WTC11 (cell line): ENCODE measurements at regions of chr18 and their contacts with region 1.

Region 1: DNA sequence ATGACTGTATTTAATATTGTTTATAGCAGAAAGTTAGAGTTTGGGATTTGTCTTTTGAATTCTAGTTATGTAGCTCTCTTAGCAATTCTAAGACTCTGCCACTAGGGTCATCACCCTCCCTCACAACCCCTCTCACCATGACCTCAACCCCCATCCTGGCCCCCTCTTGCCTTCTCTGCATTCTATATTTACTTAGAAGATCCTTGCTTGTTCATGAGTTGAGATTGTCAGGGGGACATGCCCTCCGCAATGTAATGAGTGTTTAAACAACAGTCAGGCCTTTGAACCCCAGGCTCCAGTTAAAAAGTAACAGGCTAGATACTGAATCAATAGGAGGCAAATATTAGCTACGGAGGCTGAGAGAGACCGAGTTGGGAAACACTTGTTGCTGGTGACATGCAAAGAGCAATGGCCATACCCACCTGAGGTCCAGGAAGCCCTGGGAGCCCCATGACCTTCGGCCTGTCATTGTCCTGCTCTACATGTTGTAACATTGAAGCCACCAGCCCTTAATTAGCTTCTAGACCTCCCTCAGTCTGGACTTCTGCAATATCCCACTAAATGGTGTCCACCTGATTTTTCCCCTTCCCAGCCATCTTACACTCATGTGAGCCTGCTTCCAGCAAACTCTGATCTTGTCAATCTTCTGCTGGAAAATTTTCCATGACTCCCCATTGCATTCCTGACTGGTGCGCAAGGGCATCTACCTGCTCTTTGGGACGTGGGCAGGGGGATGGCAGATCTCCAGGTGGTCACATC is 221.1 kb downstream of the ALPK2 start:
- DNase-seq: no peak
- ATAC-seq: peak; percentile 56
- H3K4me3 Mint-ChIP-seq: no peak overlapping the region
- H3K27ac Mint-ChIP-seq: no peak overlapping the region
- H3K4me1 Mint-ChIP-seq: peaks cover 4% of the 10 kb centered on the region
- H3K27me3 Mint-ChIP-seq: no peaks in the 10 kb centered on the region; the same call in 1 of the 2 replicates
- CTCF ChIP-seq: no peak

Region 2: GRCh38 chr18:58168993-58169392 is 238.8 kb before region 1 on chr18:
- CTCF ChIA-PET with region 1: no interaction called
- POLR2A ChIA-PET with region 1: no interaction called
- DNase-seq: no peak
- ATAC-seq: no peak
- H3K4me3 Mint-ChIP-seq: no peak overlapping the region
- H3K27ac Mint-ChIP-seq: no peak overlapping the region
- H3K4me1 Mint-ChIP-seq: peaks cover 8% of the 10 kb centered on the region
- H3K27me3 Mint-ChIP-seq: no peaks in the 10 kb centered on the region
- CTCF ChIP-seq: no peak

Region 3: DNA sequence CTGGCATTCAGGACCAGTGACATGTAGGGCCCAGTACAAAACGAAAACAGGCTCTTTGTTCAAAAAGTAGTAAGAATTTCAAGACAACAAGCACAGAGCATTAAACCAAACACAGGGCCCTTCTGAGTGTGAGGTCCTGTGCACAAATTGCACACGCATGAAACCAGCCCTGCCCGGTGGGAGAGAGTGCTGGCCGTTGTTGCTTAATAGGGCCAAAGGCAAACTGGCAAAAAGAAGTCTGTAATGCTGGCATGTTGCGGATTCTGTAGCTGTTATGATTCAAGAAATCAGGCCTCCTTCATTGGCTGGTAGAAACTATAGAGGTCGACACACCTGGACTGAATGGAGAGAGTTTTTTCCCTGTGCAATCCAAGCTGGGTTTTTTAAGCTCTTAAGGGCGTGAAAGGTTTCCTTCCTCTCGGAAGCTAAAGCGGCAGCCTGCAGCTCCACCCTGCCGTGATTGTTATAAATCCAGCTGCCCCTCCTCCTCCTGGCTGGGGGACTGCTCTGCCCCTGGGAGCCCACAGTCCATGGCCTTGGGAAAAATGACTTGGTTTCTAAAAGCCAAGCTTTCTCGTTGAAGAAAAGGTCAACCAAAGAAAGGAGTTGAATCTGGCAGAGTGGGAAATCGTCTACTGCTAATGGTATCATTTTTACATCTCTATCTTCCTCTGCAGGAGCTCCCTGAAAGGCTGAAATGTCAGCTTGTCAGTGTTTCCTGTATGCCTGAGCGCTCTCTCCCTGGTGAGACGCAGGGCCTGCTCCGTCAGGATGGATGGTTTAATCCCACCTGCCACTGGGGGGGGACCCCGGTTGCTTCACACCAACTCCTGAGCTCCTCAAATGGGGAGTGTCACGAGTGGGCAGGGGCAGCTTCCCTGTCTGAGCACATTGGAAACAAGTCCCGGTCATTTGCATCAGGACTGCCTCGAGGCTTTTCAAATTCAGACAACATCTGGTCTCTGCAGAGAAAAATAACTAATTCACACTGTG is 77.5 kb after region 1 on chr18:
- CTCF ChIA-PET with region 1: interaction called, 17 read pairs
- POLR2A ChIA-PET with region 1: no interaction called
- DNase-seq: peak; percentile 34
- ATAC-seq: peak; percentile 89
- H3K4me3 Mint-ChIP-seq: peak overlapping the region; percentile 28
- H3K27ac Mint-ChIP-seq: peak overlapping the region; percentile 71
- H3K4me1 Mint-ChIP-seq: peaks cover 28% of the 10 kb centered on the region
- H3K27me3 Mint-ChIP-seq: peaks cover 9% of the 10 kb centered on the region
- CTCF ChIP-seq: no peak